ENCODE measurements at regions of chr9 and their contacts with region 1.

Region 1: GRCh38 chr9:117777823-117778222 is 73.6 kb downstream of the TLR4 start:
- DNase-seq: no peak

Region 2: DNA sequence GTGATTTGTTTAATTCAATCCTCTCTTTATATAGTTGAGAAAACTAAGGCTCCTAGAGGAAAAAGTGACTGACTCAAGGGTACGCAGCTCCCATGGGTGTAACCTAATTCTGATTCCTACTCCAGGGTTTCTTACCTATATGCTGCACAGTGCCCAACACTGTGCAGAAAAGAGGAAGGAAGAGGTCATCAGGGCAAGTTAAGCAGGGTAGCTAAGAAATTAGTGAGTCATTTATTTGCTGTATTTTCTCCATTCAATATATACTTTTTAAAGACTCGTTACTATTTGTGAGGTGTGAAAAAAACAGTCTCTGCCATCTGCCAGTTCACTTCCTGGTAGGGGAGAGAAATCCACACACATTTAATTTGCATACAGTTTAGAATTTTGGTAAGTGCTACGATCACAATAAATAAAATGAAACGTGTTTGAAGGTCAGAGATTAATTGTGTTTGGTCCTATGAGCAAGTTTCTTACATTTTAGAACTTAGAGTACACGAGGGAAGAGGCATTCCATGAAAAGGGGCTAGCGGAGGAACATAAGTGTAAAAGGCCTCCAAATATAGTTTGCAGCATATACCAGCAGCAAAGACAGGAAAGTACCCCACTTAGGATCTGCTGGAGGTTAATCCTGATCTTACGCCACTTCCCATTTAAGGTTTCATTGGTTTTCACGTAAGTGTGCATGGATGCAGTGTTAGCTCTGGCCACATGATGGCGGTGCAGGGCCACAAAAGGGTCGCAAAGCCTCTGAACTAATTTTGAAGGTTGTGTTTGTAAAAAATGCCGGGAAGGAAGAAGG is 133.5 kb before region 1 on chr9:
- intact Hi-C with region 1: loop called (anchors 10 kb)
- DNase-seq: peak; percentile 56 to 94 (median 86)